PC-9 (cell line): ENCODE measurements at regions of chr11 and their contacts with region 1.

Region 1: GRCh38 chr11:34680918-34681554 is 60.1 kb downstream of the EHF start:
- DNase-seq: peak; percentile 85 to 99
- H3K4me3 ChIP-seq: no peak overlapping the region
- H3K27ac ChIP-seq: peak overlapping the region; percentile 86
- H3K4me1 ChIP-seq: peaks cover 60% of the 10 kb centered on the region
- H3K27me3 ChIP-seq: no peaks in the 10 kb centered on the region
- CTCF ChIP-seq: no peak

Region 2: DNA sequence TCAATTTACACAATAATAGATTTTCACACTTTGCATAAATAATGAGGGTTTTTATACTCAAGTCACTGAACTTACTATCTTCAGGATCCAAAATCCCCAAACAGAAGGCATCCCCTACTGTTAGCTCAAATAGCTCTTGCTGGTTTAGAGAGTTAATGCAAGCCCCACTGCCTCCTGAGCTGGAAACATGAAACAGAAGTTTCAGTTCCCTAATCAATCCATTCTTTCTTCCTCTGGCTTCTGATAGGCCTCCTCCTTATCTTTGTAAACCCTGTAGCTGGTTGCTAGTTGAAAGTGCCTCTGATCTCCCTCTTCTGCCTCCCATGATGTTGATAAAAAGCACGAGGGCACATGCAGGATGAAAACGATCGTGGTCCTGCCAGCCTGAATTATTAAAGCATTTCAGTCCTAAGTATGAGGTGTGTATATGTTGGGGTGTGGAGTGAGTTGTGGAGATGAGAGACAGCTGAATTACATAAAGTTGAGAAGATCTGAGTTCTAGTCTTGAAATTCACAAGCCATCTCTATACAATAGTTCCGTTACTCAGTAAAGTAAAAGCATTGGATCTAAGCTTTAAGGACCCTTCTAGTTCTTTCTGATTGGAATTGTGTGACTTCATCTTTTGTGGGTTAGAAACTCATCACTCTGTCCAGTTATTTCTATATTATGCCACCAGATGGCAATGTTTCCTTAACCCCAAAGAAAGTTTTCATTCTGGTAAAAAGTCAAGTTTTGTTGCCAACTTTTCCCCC is 95.1 kb before region 1 on chr11:
- CTCF ChIA-PET with region 1: no interaction called
- POLR2A ChIA-PET with region 1: no interaction called
- intact Hi-C with region 1: loop called (anchors 1 kb)
- DNase-seq: peak in 1 of 2 experiments; percentile 64
- H3K4me3 ChIP-seq: no peak overlapping the region
- H3K27ac ChIP-seq: peak overlapping the region; percentile 4; the same call in 1 of the 2 replicates
- H3K4me1 ChIP-seq: peaks cover 35% of the 10 kb centered on the region
- H3K27me3 ChIP-seq: no peaks in the 10 kb centered on the region
- CTCF ChIP-seq: peak; percentile 94

Region 3: DNA sequence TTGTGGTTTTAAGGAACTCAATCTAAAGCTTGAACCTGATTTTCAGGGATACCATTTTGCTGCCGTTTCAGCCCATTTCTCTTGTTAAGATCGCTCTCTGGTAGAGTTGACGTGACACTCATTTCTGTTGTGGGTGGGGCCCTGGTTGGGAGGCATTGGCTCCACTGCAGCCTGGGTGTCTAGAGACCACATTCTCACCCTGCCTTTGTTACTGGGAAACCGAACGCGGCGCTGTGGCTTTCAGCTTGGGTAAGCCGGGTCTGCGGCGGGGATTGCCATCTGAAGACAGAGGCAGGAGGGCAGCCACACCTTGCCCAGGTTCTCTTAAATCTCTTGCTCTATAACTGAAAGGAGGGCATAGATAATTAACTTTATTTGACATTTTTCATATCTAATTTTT is 57.0 kb before region 1 on chr11:
- CTCF ChIA-PET with region 1: no interaction called
- POLR2A ChIA-PET with region 1: interaction called, 4 read pairs
- intact Hi-C with region 1: loop called (anchors 1 kb)
- DNase-seq: peak; percentile 79 to 80
- H3K4me3 ChIP-seq: peak overlapping the region; percentile 89
- H3K27ac ChIP-seq: peak overlapping the region; percentile 96
- H3K4me1 ChIP-seq: peaks cover 67% of the 10 kb centered on the region
- H3K27me3 ChIP-seq: no peaks in the 10 kb centered on the region
- CTCF ChIP-seq: peak; percentile 27; the same call in 1 of the 2 replicates

Region 4: GRCh38 chr11:34640050-34640923 is 40.7 kb before region 1 on chr11:
- CTCF ChIA-PET with region 1: no interaction called
- POLR2A ChIA-PET with region 1: interaction called, 9 read pairs
- intact Hi-C with region 1: loop called (anchors 1 kb)
- DNase-seq: peak; percentile 92 to 100
- H3K4me3 ChIP-seq: peak overlapping the region; percentile 38; the same call in 1 of the 2 replicates
- H3K27ac ChIP-seq: peak overlapping the region; percentile 84
- H3K4me1 ChIP-seq: peaks cover 98% of the 10 kb centered on the region
- H3K27me3 ChIP-seq: no peaks in the 10 kb centered on the region
- CTCF ChIP-seq: no peak

Region 5: GRCh38 chr11:34696862-34697261 is 15.8 kb after region 1 on chr11:
- CTCF ChIA-PET with region 1: no interaction called
- POLR2A ChIA-PET with region 1: no interaction called
- intact Hi-C with region 1: no loop called
- DNase-seq: no peak
- H3K4me3 ChIP-seq: no peak overlapping the region
- H3K27ac ChIP-seq: no peak overlapping the region
- H3K4me1 ChIP-seq: no peaks in the 10 kb centered on the region
- H3K27me3 ChIP-seq: no peaks in the 10 kb centered on the region
- CTCF ChIP-seq: no peak

Region 6: GRCh38 chr11:34749666-34750659 is 68.9 kb after region 1 on chr11:
- CTCF ChIA-PET with region 1: no interaction called
- POLR2A ChIA-PET with region 1: interaction called, 27 read pairs
- intact Hi-C with region 1: no loop called
- DNase-seq: peak; percentile 80 to 87
- H3K4me3 ChIP-seq: no peak overlapping the region
- H3K27ac ChIP-seq: peak overlapping the region; percentile 8; the same call in 1 of the 2 replicates
- H3K4me1 ChIP-seq: peaks cover 24% of the 10 kb centered on the region
- H3K27me3 ChIP-seq: no peaks in the 10 kb centered on the region
- CTCF ChIP-seq: no peak